ENCODE measurements at regions of chr1 and their contacts with region 1.

Region 1: GRCh38 chr1:230867903-230868735 is at the start of gene C1orf198:
- DNase-seq: peak; percentile 48
- ATAC-seq: peak; percentile 78
- H3K4me3 ChIP-seq: peak within 1 kb of the TSS; percentile 98
- H3K27ac ChIP-seq: peak within 1 kb of the TSS; percentile 42
- H3K4me1 ChIP-seq: peaks cover 37% of the 10 kb centered on the region
- H3K27me3 ChIP-seq: no peaks in the 10 kb centered on the region
- CTCF ChIP-seq: no peak
- total RNA-seq, gene C1orf198: 24.5 and 24.8 TPM in 2 replicates

Region 2: GRCh38 chr1:230713915-230714764 is 154.0 kb before region 1 on chr1 and contains the start of gene AGT:
- CTCF ChIA-PET with region 1: no interaction called
- POLR2A ChIA-PET with region 1: no interaction called
- intact Hi-C with region 1: no loop called
- DNase-seq: peak; percentile 95
- ATAC-seq: peak; percentile 90
- H3K4me3 ChIP-seq: no peak within 1 kb of the TSS
- H3K27ac ChIP-seq: no peak within 1 kb of the TSS
- H3K4me1 ChIP-seq: peaks cover 11% of the 10 kb centered on the region
- H3K27me3 ChIP-seq: no peaks in the 10 kb centered on the region
- CTCF ChIP-seq: no peak
- total RNA-seq, gene AGT: 0.35 TPM in 1 of 2 replicates, not detected in the other

Region 3: DNA sequence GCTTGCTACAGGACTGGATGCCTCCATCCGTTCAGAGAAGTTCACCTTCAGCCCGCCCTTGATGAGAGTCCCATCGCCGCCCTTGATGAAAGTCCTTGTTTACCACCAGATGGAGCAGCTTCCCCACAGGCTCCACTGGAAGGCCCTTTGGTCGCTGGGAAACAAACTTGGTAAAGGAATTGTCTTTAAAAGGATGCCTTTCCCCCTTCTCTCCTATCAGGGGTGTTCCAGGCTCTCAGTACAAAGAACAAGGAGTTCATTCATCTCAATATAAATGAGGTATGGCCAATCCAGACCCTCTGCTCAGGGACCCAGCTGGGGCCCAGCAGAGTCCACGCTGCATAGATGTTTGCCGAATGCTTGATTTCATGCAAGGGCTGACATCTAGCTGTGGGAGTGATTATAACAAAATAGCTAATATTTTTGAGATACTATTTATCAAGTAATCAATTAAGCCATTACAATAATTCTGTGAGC is 70.1 kb before region 1 on chr1:
- CTCF ChIA-PET with region 1: no interaction called
- POLR2A ChIA-PET with region 1: no interaction called
- intact Hi-C with region 1: loop called (anchors 2 kb)
- DNase-seq: peak; percentile 78
- ATAC-seq: peak; percentile 92
- H3K4me3 ChIP-seq: no peak overlapping the region
- H3K27ac ChIP-seq: no peak overlapping the region
- H3K4me1 ChIP-seq: no peaks in the 10 kb centered on the region
- H3K27me3 ChIP-seq: peaks cover 11% of the 10 kb centered on the region
- CTCF ChIP-seq: peak; percentile 96

Region 4: DNA sequence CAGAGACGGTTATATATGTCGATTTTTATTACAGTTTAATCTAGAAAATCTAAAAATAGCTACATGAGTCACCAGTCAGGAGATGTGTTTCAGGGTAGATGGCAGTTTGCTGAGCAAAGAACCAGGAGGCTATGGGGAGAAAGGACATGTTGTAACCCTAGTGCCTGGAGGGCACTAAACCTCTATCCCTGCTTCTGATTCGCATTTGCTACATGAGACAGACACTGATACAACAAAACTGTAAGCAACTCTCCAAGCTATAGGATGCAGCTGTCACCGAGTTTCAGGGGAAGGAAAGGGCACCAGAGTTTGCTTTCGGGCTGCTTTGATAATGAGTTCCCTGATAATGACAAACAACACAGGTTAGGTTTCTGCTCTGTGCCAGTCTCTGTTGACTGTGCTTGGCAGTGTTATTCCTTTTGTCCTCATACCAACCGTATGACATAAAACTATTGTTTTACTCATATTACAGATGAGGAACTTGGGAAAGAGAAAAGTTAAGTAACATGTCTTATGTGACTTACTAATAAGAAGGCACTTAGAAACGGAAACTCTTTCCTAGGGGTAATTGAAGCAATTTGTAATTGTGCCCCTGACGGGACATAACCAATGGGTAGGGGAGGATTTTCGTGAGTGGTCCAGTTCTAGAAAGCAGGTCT is 42.9 kb before region 1 on chr1:
- CTCF ChIA-PET with region 1: no interaction called
- POLR2A ChIA-PET with region 1: interaction called, 8 read pairs
- intact Hi-C with region 1: loop called (anchors 2 kb)
- DNase-seq: peak; percentile 88
- ATAC-seq: peak; percentile 83
- H3K4me3 ChIP-seq: peak overlapping the region; percentile 16; the same call in 1 of the 2 replicates
- H3K27ac ChIP-seq: peak overlapping the region; percentile 75
- H3K4me1 ChIP-seq: peaks cover 23% of the 10 kb centered on the region
- H3K27me3 ChIP-seq: no peaks in the 10 kb centered on the region
- CTCF ChIP-seq: no peak

Region 5: DNA sequence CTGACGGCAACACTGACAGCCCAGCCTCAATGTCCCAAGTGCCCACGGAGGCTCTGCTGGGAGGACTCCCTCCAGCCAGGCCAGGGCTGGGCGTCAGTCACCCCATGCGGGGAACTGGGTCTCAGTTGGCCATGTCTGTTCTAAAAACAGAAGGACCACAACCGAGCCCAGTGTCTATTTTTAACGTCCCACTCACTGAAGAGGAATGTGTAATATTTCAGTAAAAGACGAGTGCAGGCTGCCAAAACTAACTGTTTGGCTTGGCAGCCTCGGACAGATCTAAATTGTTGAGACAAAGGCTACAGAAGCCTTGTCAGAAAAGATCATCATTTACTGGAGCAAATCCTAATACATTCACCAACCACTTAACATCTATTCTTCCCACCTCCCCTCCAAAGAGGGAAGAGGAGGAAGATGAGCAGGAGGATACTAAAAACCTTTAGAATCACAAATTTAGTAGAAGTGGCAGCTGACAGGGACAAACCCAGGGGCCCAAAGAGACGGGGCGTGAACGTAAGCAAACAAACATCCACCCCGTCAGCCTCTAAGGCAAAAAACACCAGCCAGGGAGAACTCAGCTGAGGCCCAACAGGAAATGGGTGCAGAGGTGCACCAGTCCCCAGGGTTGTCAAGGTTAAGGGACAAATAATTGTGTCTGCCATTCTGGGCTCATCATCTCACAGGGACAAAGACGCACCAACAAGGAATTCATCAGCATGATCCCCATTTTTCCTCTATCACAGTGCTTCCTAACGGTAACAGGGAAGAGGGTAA is 18.5 kb before region 1 on chr1:
- CTCF ChIA-PET with region 1: no interaction called
- POLR2A ChIA-PET with region 1: interaction called, 15 read pairs
- intact Hi-C with region 1: loop called (anchors 1 kb)
- DNase-seq: peak; percentile 92
- ATAC-seq: peak; percentile 87
- H3K4me3 ChIP-seq: peak overlapping the region; percentile 6; the same call in 1 of the 2 replicates
- H3K27ac ChIP-seq: peak overlapping the region; percentile 24
- H3K4me1 ChIP-seq: peaks cover 24% of the 10 kb centered on the region
- H3K27me3 ChIP-seq: no peaks in the 10 kb centered on the region
- CTCF ChIP-seq: no peak

Region 6: GRCh38 chr1:230917284-230918135 is 49.4 kb after region 1 on chr1:
- CTCF ChIA-PET with region 1: no interaction called
- POLR2A ChIA-PET with region 1: no interaction called
- intact Hi-C with region 1: loop called (anchors 2 kb)
- DNase-seq: peak; percentile 88
- ATAC-seq: peak; percentile 78
- H3K4me3 ChIP-seq: no peak overlapping the region
- H3K27ac ChIP-seq: no peak overlapping the region
- H3K4me1 ChIP-seq: no peaks in the 10 kb centered on the region
- H3K27me3 ChIP-seq: no peaks in the 10 kb centered on the region
- CTCF ChIP-seq: peak; percentile 85

Region 7: GRCh38 chr1:230940848-230941247 is 72.7 kb after region 1 on chr1:
- CTCF ChIA-PET with region 1: no interaction called
- POLR2A ChIA-PET with region 1: no interaction called
- intact Hi-C with region 1: no loop called
- DNase-seq: no peak
- ATAC-seq: no peak
- H3K4me3 ChIP-seq: no peak overlapping the region
- H3K27ac ChIP-seq: no peak overlapping the region
- H3K4me1 ChIP-seq: no peaks in the 10 kb centered on the region
- H3K27me3 ChIP-seq: no peaks in the 10 kb centered on the region
- CTCF ChIP-seq: no peak

Region 8: GRCh38 chr1:230957580-230957989 is 89.5 kb after region 1 on chr1:
- CTCF ChIA-PET with region 1: no interaction called
- POLR2A ChIA-PET with region 1: no interaction called
- intact Hi-C with region 1: no loop called
- DNase-seq: no peak
- ATAC-seq: no peak
- H3K4me3 ChIP-seq: no peak overlapping the region
- H3K27ac ChIP-seq: no peak overlapping the region
- H3K4me1 ChIP-seq: no peaks in the 10 kb centered on the region
- H3K27me3 ChIP-seq: no peaks in the 10 kb centered on the region
- CTCF ChIP-seq: no peak

Region 9: DNA sequence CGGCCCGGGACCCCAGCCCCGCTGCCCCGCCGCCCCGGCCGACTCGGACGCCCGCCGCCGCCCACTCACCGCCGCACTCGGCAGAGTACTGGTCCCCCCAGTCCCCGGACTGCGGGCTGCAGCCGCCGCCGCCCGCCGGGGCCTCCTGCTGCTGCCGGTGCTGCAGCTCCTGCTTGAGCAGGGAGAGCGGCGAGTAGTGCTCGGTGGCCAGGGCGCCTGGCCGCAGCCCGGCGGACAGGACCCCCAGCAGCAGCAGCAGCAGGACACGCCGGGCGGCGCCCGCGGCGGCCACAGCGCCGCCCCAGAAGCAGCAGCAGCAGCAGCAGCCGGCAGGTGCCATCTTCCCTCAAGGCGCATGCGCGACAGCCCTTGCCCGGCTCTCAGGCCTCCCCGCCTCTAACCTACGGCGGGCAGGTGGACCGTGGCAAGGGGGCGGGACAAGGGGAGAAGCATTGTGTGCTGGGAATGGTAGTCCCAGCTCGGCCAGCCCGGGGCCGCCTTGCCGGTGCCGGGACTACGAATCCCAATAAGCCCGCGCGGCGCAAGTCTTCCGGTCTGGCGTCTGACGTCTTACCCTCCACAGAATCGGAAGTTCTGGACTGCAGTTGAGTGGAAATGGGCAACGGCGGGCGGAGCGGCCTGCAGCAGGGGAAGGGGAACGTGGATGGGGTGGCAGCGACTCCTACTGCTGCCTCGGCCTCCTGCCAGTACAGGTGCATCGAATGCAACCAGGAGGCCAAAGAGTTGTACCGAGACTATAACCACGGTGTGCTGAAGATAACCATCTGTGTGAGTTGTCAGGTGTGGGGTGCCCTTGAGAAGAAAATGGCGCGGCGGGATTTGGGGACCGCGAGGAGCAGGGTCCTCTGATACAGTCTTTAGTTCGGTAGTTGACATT is 110.6 kb after region 1 on chr1 and contains the starts of genes ARV1 and TTC13:
- CTCF ChIA-PET with region 1: no interaction called
- POLR2A ChIA-PET with region 1: no interaction called
- intact Hi-C with region 1: loop called (anchors 2 kb)
- DNase-seq: peak; percentile 99
- ATAC-seq: peak; percentile 99
- H3K4me3 ChIP-seq: peak within 1 kb of the TSS; percentile 91
- H3K27ac ChIP-seq: no peak within 1 kb of the TSS
- H3K4me1 ChIP-seq: peaks cover 17% of the 10 kb centered on the region
- H3K27me3 ChIP-seq: no peaks in the 10 kb centered on the region
- CTCF ChIP-seq: peak; percentile 60
- total RNA-seq, gene ARV1: 29.4 and 30.6 TPM in 2 replicates
- total RNA-seq, gene TTC13: 17.0 and 20.2 TPM in 2 replicates

Region 10: DNA sequence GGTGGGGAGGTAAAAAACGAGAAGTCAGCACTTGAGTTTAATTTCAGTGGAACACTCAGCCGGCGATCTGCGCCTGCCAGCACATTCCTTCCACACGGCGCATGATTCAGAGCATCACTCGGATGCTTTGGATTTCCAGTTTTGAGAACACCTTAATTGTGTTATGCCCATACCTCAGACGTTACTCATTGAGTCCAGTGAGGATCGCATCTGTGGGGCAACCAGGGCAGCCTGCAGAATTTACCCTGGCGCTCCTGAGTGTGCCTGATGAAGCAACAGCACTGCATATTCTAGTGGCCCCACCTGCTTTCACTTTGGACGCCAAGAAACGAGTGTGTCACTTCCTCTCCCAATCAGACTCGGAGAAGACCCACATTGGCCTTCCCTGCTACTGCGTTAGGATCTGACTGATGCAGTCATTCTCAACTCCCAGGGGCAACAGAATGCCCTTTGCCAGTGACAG is 152.1 kb after region 1 on chr1:
- CTCF ChIA-PET with region 1: no interaction called
- POLR2A ChIA-PET with region 1: no interaction called
- intact Hi-C with region 1: no loop called
- DNase-seq: peak; percentile 78
- ATAC-seq: peak; percentile 64
- H3K4me3 ChIP-seq: peak overlapping the region; percentile 45
- H3K27ac ChIP-seq: no peak overlapping the region
- H3K4me1 ChIP-seq: peaks cover 17% of the 10 kb centered on the region
- H3K27me3 ChIP-seq: no peaks in the 10 kb centered on the region
- CTCF ChIP-seq: peak; percentile 45; the same call in 1 of the 2 replicates

Measured in PC-3 (cell line).